ENCODE measurements at regions of chr2 and their contacts with region 1.

Region 1: GRCh38 chr2:64988420-64989125 is 626 bp upstream of the SLC1A4 start:
- DNase-seq: peak; percentile 93
- H3K4me3 Mint-ChIP-seq: peak overlapping the region; percentile 77
- H3K27ac Mint-ChIP-seq: peak overlapping the region; percentile 74
- H3K4me1 Mint-ChIP-seq: peaks cover 54% of the 10 kb centered on the region
- H3K27me3 Mint-ChIP-seq: peaks cover 16% of the 10 kb centered on the region

Region 2: GRCh38 chr2:64214281-64215115 is 774.1 kb before region 1 on chr2:
- intact Hi-C with region 1: loop called (anchors 5 kb)
- DNase-seq: peak; percentile 80
- H3K4me3 Mint-ChIP-seq: peak overlapping the region; percentile 74
- H3K27ac Mint-ChIP-seq: peak overlapping the region; percentile 97
- H3K4me1 Mint-ChIP-seq: peaks cover 41% of the 10 kb centered on the region
- H3K27me3 Mint-ChIP-seq: no peaks in the 10 kb centered on the region

Region 3: GRCh38 chr2:64750817-64751285 is 237.7 kb before region 1 on chr2:
- intact Hi-C with region 1: loop called (anchors 5 kb)
- DNase-seq: peak; percentile 99
- H3K4me3 Mint-ChIP-seq: peak overlapping the region; percentile 98
- H3K27ac Mint-ChIP-seq: peak overlapping the region; percentile 99
- H3K4me1 Mint-ChIP-seq: peaks cover 22% of the 10 kb centered on the region
- H3K27me3 Mint-ChIP-seq: no peaks in the 10 kb centered on the region

Region 4: GRCh38 chr2:65040400-65041261 is 52.1 kb after region 1 on chr2:
- intact Hi-C with region 1: loop called (anchors 2 kb)
- DNase-seq: peak; percentile 94
- H3K4me3 Mint-ChIP-seq: peak overlapping the region; percentile 53
- H3K27ac Mint-ChIP-seq: no peak overlapping the region
- H3K4me1 Mint-ChIP-seq: peaks cover 20% of the 10 kb centered on the region
- H3K27me3 Mint-ChIP-seq: no peaks in the 10 kb centered on the region

Region 5: DNA sequence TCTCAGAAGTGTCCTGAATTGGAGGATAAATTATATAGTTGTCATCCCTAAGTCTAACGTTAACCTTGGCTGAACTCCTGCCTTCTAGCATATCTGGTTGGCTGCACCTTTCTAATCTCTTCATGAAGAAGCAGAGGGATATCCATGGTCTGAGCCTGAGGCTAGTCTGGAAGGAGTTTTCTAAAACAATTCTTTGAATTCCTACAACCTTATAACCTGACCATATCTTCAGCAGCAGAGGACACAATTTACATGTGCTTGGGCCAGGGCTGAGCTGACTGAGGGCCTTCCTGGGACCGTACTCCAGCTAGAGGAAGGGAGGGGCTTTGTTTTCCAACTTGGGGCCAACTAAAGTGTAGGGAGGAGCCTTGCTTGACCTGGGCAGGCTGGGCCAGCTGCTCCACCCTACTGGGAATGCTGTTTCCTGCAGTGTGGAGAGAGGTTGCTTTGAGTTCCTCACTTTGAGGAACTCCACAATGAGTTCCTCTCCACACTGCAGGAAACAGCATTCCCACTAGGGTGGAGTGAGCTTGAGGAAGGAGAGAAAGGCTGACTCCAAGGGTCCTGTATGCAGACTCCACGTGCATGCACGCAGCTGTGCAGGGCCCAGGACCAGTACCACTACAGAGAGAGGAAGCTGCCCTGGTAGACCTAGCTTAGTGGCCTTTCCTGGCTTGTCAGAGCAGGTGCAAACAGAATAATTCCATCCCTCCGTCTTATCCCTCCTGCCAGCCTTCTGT is 87.2 kb after region 1 on chr2:
- intact Hi-C with region 1: no loop called
- DNase-seq: no peak
- H3K4me3 Mint-ChIP-seq: no peak overlapping the region
- H3K27ac Mint-ChIP-seq: no peak overlapping the region
- H3K4me1 Mint-ChIP-seq: peaks cover 3% of the 10 kb centered on the region
- H3K27me3 Mint-ChIP-seq: no peaks in the 10 kb centered on the region

Region 6: GRCh38 chr2:65227425-65228262 is 239.1 kb after region 1 on chr2 and contains the start of gene ACTR2:
- intact Hi-C with region 1: loop called (anchors 2 kb)
- DNase-seq: peak; percentile 99
- H3K4me3 Mint-ChIP-seq: peak within 1 kb of the TSS; percentile 97
- H3K27ac Mint-ChIP-seq: peak within 1 kb of the TSS; percentile 98
- H3K4me1 Mint-ChIP-seq: peaks cover 28% of the 10 kb centered on the region
- H3K27me3 Mint-ChIP-seq: peaks cover 1% of the 10 kb centered on the region
- total RNA-seq, gene ACTR2: 298 TPM in 2 replicates

Region 7: GRCh38 chr2:65687614-65688013 is 699.0 kb after region 1 on chr2:
- intact Hi-C with region 1: no loop called
- DNase-seq: no peak
- H3K4me3 Mint-ChIP-seq: no peak overlapping the region
- H3K27ac Mint-ChIP-seq: no peak overlapping the region
- H3K4me1 Mint-ChIP-seq: no peaks in the 10 kb centered on the region
- H3K27me3 Mint-ChIP-seq: peaks cover 5% of the 10 kb centered on the region

Measured in activated CD4-positive, alpha-beta T cell treated with anti-CD3 and anti-CD28 coated beads, Interleukin-2, amount 10 ng/mL, durations not matched to agents 24 days and 14 days (primary cell).